BJ (cell line): ENCODE measurements at regions of chr18 and their contacts with region 1.

Region 1: DNA sequence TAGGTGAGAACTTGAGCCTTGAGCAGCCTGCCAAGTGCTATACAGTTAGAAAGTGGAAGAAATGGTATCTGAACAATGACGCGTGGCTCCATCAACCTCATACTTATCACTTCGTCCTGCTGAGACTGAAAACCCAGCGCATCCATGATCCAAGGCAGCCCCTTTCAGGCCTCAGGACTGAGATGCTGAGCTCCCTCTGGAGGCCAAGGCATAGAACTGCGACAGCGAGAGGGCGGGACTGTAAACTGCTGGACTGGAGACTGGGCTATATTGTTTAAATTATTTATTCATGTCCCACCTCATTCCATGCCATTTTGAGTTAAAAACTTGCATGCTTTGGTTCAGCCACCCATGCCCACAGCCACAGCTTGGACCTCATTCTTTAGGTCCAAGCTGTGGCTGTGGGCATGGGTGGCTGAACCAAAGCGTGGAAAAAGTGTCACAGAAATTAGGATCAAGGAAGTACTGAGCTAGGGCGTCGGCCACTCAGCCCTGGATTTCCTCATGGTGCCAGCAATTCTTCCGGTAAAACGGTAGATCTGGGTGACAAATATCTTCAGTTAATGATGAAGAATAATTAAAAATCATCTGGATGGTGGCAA is 195.5 kb downstream of the L3MBTL4 start:
- DNase-seq: no peak
- H3K4me3 ChIP-seq: no peak overlapping the region
- H3K27me3 ChIP-seq: no peaks in the 10 kb centered on the region
- CTCF ChIP-seq: peak; percentile 90

Region 2: DNA sequence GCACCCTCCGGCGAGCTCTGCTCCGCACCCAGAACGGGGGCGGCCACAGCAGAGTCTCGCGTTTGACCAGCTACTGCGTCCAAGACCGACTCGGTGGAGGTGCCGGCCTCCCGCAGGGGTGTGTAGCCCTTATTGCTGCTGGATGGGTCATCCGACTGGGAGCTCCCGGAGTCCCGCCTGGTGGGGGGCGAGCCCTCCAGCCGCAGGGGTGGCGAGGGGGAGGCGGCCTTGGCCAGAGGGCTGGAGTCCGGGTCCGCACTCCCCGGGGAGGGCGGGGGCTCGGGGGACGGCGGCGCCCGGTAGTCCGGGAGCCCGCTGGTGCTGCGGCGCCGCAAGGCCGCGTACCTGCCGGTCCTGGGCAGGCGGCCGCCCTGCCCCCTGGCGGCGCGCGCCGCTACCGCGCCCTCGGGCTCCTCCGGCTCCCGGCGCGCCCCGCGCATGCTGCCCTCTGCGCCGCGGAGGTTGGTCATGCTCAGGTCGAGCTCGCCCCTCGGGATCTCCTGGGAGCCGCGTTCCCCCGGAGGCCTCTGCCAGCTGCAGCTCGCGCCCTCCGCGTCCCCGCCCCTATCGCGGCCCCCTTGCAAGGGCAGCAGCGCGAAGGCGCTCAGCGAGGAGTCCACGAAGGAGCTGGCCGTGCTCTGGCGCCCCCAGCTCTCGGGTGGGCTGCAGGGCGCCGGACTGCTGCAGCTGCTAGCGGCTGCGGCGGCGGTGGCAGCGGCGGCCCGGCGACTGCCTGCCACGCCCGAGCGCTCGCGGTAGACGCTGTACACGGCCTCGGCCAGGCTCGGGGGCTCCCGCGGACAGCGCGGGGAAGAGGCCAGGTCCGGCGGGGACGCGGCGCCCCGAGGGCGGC is 328.7 kb before region 1 on chr18:
- CTCF ChIA-PET with region 1: interaction called, 11 read pairs
- POLR2A ChIA-PET with region 1: no interaction called
- DNase-seq: no peak
- H3K4me3 ChIP-seq: no peak overlapping the region
- H3K27me3 ChIP-seq: peaks cover 12% of the 10 kb centered on the region
- CTCF ChIP-seq: no peak

Region 3: GRCh38 chr18:6031002-6031401 is 188.2 kb before region 1 on chr18:
- CTCF ChIA-PET with region 1: no interaction called
- POLR2A ChIA-PET with region 1: no interaction called
- DNase-seq: no peak
- H3K4me3 ChIP-seq: no peak overlapping the region
- H3K27me3 ChIP-seq: no peaks in the 10 kb centered on the region
- CTCF ChIP-seq: no peak

Region 4: GRCh38 chr18:6207116-6207515 is 12.1 kb before region 1 on chr18:
- CTCF ChIA-PET with region 1: interaction called, 22 read pairs
- POLR2A ChIA-PET with region 1: no interaction called
- DNase-seq: no peak
- H3K4me3 ChIP-seq: no peak overlapping the region
- H3K27me3 ChIP-seq: no peaks in the 10 kb centered on the region
- CTCF ChIP-seq: no peak